GM12878 (cell line): ENCODE measurements at regions of chr14 and their contacts with region 1.

Region 1: DNA sequence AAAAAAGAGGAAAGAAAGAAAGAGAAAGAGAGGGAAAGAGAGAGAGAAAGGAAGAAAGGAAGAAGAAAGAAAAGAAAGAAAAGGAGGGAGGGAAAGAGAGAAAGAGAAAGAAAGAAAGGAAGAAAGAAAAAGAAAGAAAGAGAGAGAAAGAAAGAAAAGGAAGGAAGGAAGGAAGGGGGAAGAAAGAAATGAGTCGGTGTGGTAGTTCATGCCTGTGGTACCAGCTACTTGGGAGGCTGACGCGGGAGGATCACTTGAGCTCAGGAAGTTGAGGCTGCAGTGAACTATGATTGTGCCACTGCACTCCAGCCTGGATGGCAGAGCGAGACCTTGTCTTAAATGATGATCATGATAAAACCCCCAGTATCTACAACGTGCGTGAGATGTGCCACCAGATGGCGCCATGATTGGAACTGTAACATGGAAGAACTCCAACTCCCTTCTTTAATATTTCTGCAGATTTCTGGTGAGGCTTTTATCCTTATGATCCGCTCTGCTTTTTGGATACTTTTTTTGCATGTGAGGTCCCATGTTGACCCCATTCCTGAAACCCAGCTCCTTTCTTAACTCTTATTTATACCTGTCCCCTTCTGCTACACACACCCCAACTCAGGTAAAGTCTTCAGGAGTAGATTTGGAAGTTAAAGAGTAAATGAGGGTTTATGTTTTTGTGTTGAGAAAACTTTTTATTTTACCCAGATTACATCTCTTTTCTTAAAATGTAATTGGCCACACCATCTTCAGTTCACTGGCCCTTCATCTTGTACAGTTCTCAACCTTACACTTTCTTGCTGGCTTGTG is 25.6 kb downstream of the RNASE10 start:
- DNase-seq: peak; percentile 21
- ATAC-seq: peak; percentile 98
- H3K4me3 ChIP-seq: no peak overlapping the region
- H3K27ac ChIP-seq: no peak overlapping the region
- H3K4me1 ChIP-seq: no peaks in the 10 kb centered on the region
- H3K27me3 ChIP-seq: no peaks in the 10 kb centered on the region
- CTCF ChIP-seq: peak; percentile 65 to 75 (median 73)
- EP300 ChIP-seq: no peak
- POLR2A ChIP-seq: no peak
- RAD21 ChIP-seq: peak; percentile 66

Region 2: GRCh38 chr14:20516906-20517305 is 14.1 kb before region 1 on chr14:
- CTCF ChIA-PET with region 1: interaction called, 21 read pairs
- POLR2A ChIA-PET with region 1: no interaction called
- RAD21 ChIA-PET with region 1: no interaction called
- SMC1A ChIA-PET with region 1: no interaction called
- in situ Hi-C with region 1: no loop called
- intact Hi-C with region 1: loop called (anchors 1 kb)
- DNase-seq: no peak
- ATAC-seq: no peak
- H3K4me3 ChIP-seq: no peak overlapping the region
- H3K27ac ChIP-seq: no peak overlapping the region
- H3K4me1 ChIP-seq: no peaks in the 10 kb centered on the region
- H3K27me3 ChIP-seq: no peaks in the 10 kb centered on the region
- CTCF ChIP-seq: no peak
- EP300 ChIP-seq: no peak
- POLR2A ChIP-seq: no peak
- RAD21 ChIP-seq: no peak

Region 3: DNA sequence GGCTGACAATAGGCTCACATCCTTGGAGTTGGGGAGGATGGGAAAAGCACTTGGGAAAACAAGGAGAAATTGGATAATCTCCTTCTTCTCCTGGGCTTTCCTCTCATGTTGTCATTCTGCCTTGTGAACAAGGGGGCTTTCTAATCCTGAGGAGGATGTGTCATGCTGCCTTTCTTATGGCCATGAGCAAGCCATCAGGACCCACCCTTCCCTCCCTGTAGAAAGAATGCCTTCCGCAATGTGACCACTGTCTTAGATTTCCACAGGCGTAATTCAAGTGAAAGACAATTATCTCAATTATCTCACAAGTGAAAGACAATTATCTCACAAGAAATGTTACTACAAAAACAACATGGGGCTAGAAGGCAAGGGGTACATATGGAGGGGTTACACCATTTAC is 113.5 kb after region 1 on chr14:
- CTCF ChIA-PET with region 1: no interaction called
- POLR2A ChIA-PET with region 1: no interaction called
- RAD21 ChIA-PET with region 1: no interaction called
- SMC1A ChIA-PET with region 1: no interaction called
- in situ Hi-C with region 1: no loop called
- intact Hi-C with region 1: no loop called
- DNase-seq: no peak
- ATAC-seq: no peak
- H3K4me3 ChIP-seq: no peak overlapping the region
- H3K27ac ChIP-seq: no peak overlapping the region
- H3K4me1 ChIP-seq: no peaks in the 10 kb centered on the region
- H3K27me3 ChIP-seq: no peaks in the 10 kb centered on the region; a peak in 1 of 4 replicates
- CTCF ChIP-seq: no peak
- EP300 ChIP-seq: no peak
- POLR2A ChIP-seq: no peak
- RAD21 ChIP-seq: no peak